Left cardiac atrium (tissue), 4 donors: ENCODE measurements at regions of chr15 and their contacts with region 1.

Region 1: GRCh38 chr15:37572401-37572800 is 362.0 kb upstream of the TMCO5A start:
- DNase-seq: no peak
- ATAC-seq: no peak

Region 2: GRCh38 chr15:37616215-37616614 is 43.8 kb after region 1 on chr15:
- intact Hi-C with region 1: loop called in 1 of 2 experiments (anchors 5 kb)
- DNase-seq: no peak
- ATAC-seq: no peak

Region 3: DNA sequence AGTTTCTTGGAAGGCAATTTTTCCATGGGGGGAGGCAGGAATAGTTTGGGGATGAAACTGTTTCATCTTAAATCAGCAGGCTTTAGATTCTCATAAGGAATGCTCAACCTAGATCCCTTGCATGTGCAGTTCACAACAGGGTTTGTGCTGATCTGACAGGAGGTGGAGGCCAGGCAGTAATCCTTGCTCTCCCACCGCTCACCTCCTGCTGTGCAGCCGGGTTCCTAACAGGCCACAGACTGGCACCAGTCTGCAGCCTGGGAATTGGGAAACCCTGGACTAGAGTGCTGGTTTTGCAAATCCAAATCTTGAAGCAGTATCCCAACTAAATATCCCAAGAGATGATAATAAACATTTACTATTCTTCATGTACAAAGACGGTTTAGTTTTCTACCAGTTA is 105.7 kb after region 1 on chr15:
- intact Hi-C with region 1: no loop called
- DNase-seq: no peak
- ATAC-seq: no peak